Endothelial cell of umbilical vein (primary cell): ENCODE measurements at regions of chr10 and their contacts with region 1.

Region 1: GRCh38 chr10:14032395-14032998 is 298.2 kb downstream of the FRMD4A start:
- DNase-seq: peak; percentile 41
- H3K4me3 ChIP-seq: no peak overlapping the region
- H3K27ac ChIP-seq: no peak overlapping the region
- H3K4me1 ChIP-seq: peaks cover 14% of the 10 kb centered on the region
- H3K27me3 ChIP-seq: no peaks in the 10 kb centered on the region
- CTCF ChIP-seq: peak; percentile 89 to 93
- POLR2A ChIP-seq: no peak

Region 2: GRCh38 chr10:13993169-13993568 is 39.3 kb before region 1 on chr10:
- CTCF ChIA-PET with region 1: interaction called, 4 read pairs
- POLR2A ChIA-PET with region 1: interaction called, 10 read pairs
- dilution Hi-C with region 1: no loop called
- intact Hi-C with region 1: no loop called
- DNase-seq: no peak
- H3K4me3 ChIP-seq: no peak overlapping the region
- H3K27ac ChIP-seq: peak overlapping the region; percentile 15
- H3K4me1 ChIP-seq: peaks cover 71% of the 10 kb centered on the region
- H3K27me3 ChIP-seq: no peaks in the 10 kb centered on the region
- CTCF ChIP-seq: no peak
- POLR2A ChIP-seq: no peak

Region 3: GRCh38 chr10:14016011-14016536 is 16.4 kb before region 1 on chr10:
- CTCF ChIA-PET with region 1: interaction called, 12 read pairs
- POLR2A ChIA-PET with region 1: no interaction called
- dilution Hi-C with region 1: no loop called
- intact Hi-C with region 1: no loop called
- DNase-seq: peak; percentile 69
- H3K4me3 ChIP-seq: no peak overlapping the region
- H3K27ac ChIP-seq: no peak overlapping the region
- H3K4me1 ChIP-seq: peaks cover 10% of the 10 kb centered on the region
- H3K27me3 ChIP-seq: no peaks in the 10 kb centered on the region
- CTCF ChIP-seq: no peak
- POLR2A ChIP-seq: no peak

Region 4: GRCh38 chr10:14074057-14074884 is 41.8 kb after region 1 on chr10:
- CTCF ChIA-PET with region 1: interaction called, 6 read pairs
- POLR2A ChIA-PET with region 1: no interaction called
- dilution Hi-C with region 1: no loop called
- intact Hi-C with region 1: loop called (anchors 1 kb)
- DNase-seq: peak; percentile 98
- H3K4me3 ChIP-seq: no peak overlapping the region
- H3K27ac ChIP-seq: peak overlapping the region; percentile 81
- H3K4me1 ChIP-seq: peaks cover 43% of the 10 kb centered on the region
- H3K27me3 ChIP-seq: no peaks in the 10 kb centered on the region
- CTCF ChIP-seq: no peak
- POLR2A ChIP-seq: no peak